Prostate gland (tissue), 2 donors: ENCODE measurements at regions of chr9 and their contacts with region 1.

Region 1: DNA sequence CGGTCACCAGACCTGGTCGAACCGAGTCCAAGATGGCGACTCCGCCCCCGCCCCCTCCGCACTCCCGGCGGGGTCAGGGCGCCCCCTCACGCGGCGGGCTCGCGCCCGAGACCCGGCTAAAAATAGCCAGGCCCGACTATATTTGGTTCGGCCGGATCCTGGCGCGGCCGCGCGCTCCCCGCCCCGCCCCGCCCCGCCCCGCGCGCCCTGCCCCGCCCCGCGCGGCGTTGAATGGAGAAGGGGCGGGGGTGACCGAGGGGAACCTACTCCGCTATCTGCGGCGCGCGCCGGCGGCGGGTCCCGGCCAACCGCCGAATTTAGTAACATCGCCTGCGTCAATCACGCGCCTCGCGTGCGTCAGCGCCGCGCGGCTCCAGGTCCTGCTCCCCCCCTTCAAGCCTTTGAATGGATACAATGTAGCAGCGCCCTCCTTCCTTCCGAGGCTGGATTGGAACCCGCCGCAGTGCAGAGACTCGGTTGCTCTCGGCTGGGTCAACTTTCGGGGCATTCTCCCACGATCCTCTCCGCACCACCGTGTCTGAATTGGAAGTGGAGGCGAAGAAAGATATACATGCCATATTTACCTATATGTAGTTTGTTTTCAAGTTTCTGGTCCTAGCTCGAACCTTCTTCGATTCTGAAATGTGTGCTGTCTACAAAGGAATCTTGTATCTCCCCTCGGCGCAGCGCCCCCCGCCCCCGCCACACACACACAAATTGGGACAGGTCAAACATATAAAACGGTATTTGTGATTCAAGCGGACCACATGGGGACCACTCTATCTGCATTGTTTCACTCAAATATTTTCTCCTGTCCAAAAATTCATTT is 1.6 kb upstream of the NR4A3 start:
- DNase-seq: peak; percentile 85
- H3K4me3 ChIP-seq: peak overlapping the region; percentile 76 to 77
- H3K27ac ChIP-seq: peak overlapping the region; percentile 97 to 98
- H3K4me1 ChIP-seq: peaks cover 8% of the 10 kb centered on the region
- H3K27me3 ChIP-seq: no peaks in the 10 kb centered on the region
- CTCF ChIP-seq: peak in 2 of 4 experiments; percentile 14 to 20
- POLR2A ChIP-seq: peak; percentile 47

Region 2: DNA sequence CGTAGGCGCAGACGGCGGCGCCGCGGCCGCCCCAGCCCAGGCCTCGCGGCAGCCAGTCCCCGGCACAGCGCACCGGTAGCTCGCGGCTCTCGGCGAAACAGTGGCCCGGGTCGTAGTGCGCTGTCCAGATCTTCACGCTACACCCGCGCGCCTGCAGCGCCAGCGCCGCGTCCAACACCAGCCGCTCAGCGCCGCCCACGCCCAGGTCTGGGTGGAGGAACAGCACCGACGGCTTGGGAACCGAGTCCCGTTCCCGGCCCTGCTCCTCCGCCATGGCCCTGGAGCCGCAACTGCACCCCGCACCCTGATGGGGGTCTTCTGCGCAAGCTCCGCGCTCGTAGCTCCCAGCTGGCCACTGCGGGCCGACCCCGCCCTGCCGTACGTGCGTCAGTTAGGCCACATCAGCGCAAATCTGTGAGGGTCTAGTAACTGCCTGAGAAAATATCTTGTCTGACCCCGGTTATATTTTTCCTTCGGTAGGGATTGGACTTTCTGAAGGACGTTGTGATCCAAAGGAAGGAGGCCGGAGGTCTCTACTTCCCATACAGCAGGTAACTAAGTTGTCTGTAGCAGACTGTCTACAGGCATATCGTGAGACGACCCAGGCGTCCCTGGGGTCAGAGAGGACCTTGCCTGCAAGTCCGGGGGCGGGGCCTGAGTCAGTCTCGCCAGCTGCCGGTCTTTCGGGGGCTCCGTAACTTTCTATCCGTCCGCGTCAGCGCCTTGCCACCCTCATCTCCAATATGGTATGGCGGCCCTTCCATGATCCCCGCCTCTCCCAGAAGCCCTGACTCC is 598.3 kb before region 1 on chr9 and contains the starts of genes ALG2 and SEC61B:
- intact Hi-C with region 1: loop called (anchors 5 kb)
- DNase-seq: peak; percentile 89
- H3K4me3 ChIP-seq: peak within 1 kb of the TSS; percentile 91 to 93
- H3K27ac ChIP-seq: peak within 1 kb of the TSS; percentile 87 to 91
- H3K4me1 ChIP-seq: peaks cover 2% of the 10 kb centered on the region
- H3K27me3 ChIP-seq: no peaks in the 10 kb centered on the region
- CTCF ChIP-seq: peak in 2 of 4 experiments; percentile 19 to 21
- POLR2A ChIP-seq: peak; percentile 82
- total RNA-seq, gene ALG2: 47.0 to 64.4 TPM
- total RNA-seq, gene SEC61B: 67.7 to 126 TPM

Region 3: GRCh38 chr9:99868845-99869244 is 48.8 kb after region 1 on chr9:
- intact Hi-C with region 1: no loop called
- DNase-seq: no peak
- H3K4me3 ChIP-seq: no peak overlapping the region
- H3K27ac ChIP-seq: no peak overlapping the region
- H3K4me1 ChIP-seq: no peaks in the 10 kb centered on the region
- H3K27me3 ChIP-seq: no peaks in the 10 kb centered on the region
- CTCF ChIP-seq: no peak
- POLR2A ChIP-seq: no peak

Region 4: GRCh38 chr9:99906403-99907207 is 86.5 kb after region 1 on chr9 and contains the start of gene STX17:
- intact Hi-C with region 1: loop called (anchors 2 kb)
- DNase-seq: peak; percentile 73
- H3K4me3 ChIP-seq: peak within 1 kb of the TSS; percentile 82 to 85
- H3K27ac ChIP-seq: peak within 1 kb of the TSS; percentile 97
- H3K4me1 ChIP-seq: peaks cover 2% of the 10 kb centered on the region
- H3K27me3 ChIP-seq: no peaks in the 10 kb centered on the region
- CTCF ChIP-seq: peak in 1 of 4 experiments; percentile 5
- POLR2A ChIP-seq: peak; percentile 83
- total RNA-seq, gene STX17: 34.0 to 87.9 TPM

Region 5: GRCh38 chr9:100216178-100216787 is 396.2 kb after region 1 on chr9:
- intact Hi-C with region 1: loop called (anchors 10 kb)
- DNase-seq: peak; percentile 30
- H3K4me3 ChIP-seq: no peak overlapping the region
- H3K27ac ChIP-seq: no peak overlapping the region
- H3K4me1 ChIP-seq: no peaks in the 10 kb centered on the region
- H3K27me3 ChIP-seq: no peaks in the 10 kb centered on the region
- CTCF ChIP-seq: peak in 3 of 4 experiments; percentile 50 to 59 (median 53)
- POLR2A ChIP-seq: no peak